Activated T-helper 1 cell treated with anti-CD3 and anti-CD28 coated beads, Interleukin-12 subunit alpha, Interleukin-12 subunit beta, Interleukin-2, Interleukin-4 antibody, amounts not matched to agents 30 ng/mL and 10 ng/mL and 1 ng/mL, durations not matched to agents 14 hours and 24 hours and 36 hours (primary cell): ENCODE measurements at regions of chr12 and their contacts with region 1.

Region 1: GRCh38 chr12:66235626-66236281 is 46.7 kb downstream of the IRAK3 start:
- DNase-seq: no peak
- H3K4me3 Mint-ChIP-seq: peak overlapping the region; percentile 59
- H3K27ac Mint-ChIP-seq: no peak overlapping the region
- H3K4me1 Mint-ChIP-seq: peaks cover 11% of the 10 kb centered on the region
- H3K27me3 Mint-ChIP-seq: peaks cover 17% of the 10 kb centered on the region

Region 2: DNA sequence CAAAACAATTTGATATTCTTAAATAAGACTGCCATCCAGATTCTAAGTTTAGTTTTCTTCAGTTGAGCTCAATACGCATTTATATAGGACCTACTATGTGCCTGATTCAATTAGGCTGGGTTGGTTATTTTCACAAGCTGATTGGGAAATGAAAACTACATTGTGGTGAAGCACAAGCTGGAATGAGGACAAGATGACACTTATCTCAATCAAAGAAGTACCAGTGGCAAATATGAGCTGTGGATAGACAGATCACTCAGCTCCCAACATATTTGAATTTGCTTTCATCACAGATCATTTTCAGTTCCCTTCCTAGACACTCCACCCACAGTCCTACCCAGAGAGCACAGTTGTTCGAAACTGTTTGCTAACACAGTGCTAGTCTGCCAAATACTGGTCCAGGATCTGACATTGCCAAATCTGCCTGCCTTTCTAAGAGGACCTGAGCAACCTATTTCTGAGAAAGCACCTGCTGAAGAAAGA is 179.9 kb before region 1 on chr12:
- intact Hi-C with region 1: no loop called
- DNase-seq: no peak
- H3K4me3 Mint-ChIP-seq: no peak overlapping the region
- H3K27ac Mint-ChIP-seq: no peak overlapping the region
- H3K4me1 Mint-ChIP-seq: no peaks in the 10 kb centered on the region
- H3K27me3 Mint-ChIP-seq: peaks cover 7% of the 10 kb centered on the region

Region 3: GRCh38 chr12:66203820-66204219 is 31.9 kb before region 1 on chr12:
- intact Hi-C with region 1: loop called (anchors 5 kb)
- DNase-seq: no peak
- H3K4me3 Mint-ChIP-seq: no peak overlapping the region
- H3K27ac Mint-ChIP-seq: peak overlapping the region; percentile 81
- H3K4me1 Mint-ChIP-seq: peaks cover 21% of the 10 kb centered on the region
- H3K27me3 Mint-ChIP-seq: peaks cover 7% of the 10 kb centered on the region